ENCODE measurements at regions of chr7 and their contacts with region 1.

Region 1: GRCh38 chr7:66493235-66494181 is 135.2 kb upstream of the KCTD7 start:
- DNase-seq: peak; percentile 91 to 99 (median 95)
- ATAC-seq: peak; percentile 92
- H3K4me3 ChIP-seq: peak overlapping the region; percentile 87
- H3K4me3 Mint-ChIP-seq: peak overlapping the region; percentile 97
- H3K27ac ChIP-seq: peak overlapping the region; percentile 86 to 95
- H3K27ac Mint-ChIP-seq: peak overlapping the region; percentile 100
- H3K4me1 ChIP-seq: peaks cover 20% of the 10 kb centered on the region
- H3K4me1 Mint-ChIP-seq: peaks cover 22% of the 10 kb centered on the region
- H3K27me3 ChIP-seq: no peaks in the 10 kb centered on the region
- H3K27me3 Mint-ChIP-seq: no peaks in the 10 kb centered on the region
- CTCF ChIP-seq: no peak

Region 2: GRCh38 chr7:65750511-65751344 is 742.8 kb before region 1 on chr7:
- CTCF ChIA-PET with region 1: no interaction called
- POLR2A ChIA-PET with region 1: interaction called, 4 read pairs
- intact Hi-C with region 1: loop called in 1 of 2 experiments (anchors 10 kb)
- DNase-seq: peak; percentile 70 to 92 (median 84)
- ATAC-seq: peak; percentile 96
- H3K4me3 ChIP-seq: peak overlapping the region; percentile 98
- H3K4me3 Mint-ChIP-seq: peak overlapping the region; percentile 99
- H3K27ac ChIP-seq: peak overlapping the region; percentile 56 to 69
- H3K27ac Mint-ChIP-seq: peak overlapping the region; percentile 96
- H3K4me1 ChIP-seq: peaks cover 25% of the 10 kb centered on the region
- H3K4me1 Mint-ChIP-seq: peaks cover 33% of the 10 kb centered on the region
- H3K27me3 ChIP-seq: no peaks in the 10 kb centered on the region
- H3K27me3 Mint-ChIP-seq: no peaks in the 10 kb centered on the region
- CTCF ChIP-seq: no peak

Region 3: DNA sequence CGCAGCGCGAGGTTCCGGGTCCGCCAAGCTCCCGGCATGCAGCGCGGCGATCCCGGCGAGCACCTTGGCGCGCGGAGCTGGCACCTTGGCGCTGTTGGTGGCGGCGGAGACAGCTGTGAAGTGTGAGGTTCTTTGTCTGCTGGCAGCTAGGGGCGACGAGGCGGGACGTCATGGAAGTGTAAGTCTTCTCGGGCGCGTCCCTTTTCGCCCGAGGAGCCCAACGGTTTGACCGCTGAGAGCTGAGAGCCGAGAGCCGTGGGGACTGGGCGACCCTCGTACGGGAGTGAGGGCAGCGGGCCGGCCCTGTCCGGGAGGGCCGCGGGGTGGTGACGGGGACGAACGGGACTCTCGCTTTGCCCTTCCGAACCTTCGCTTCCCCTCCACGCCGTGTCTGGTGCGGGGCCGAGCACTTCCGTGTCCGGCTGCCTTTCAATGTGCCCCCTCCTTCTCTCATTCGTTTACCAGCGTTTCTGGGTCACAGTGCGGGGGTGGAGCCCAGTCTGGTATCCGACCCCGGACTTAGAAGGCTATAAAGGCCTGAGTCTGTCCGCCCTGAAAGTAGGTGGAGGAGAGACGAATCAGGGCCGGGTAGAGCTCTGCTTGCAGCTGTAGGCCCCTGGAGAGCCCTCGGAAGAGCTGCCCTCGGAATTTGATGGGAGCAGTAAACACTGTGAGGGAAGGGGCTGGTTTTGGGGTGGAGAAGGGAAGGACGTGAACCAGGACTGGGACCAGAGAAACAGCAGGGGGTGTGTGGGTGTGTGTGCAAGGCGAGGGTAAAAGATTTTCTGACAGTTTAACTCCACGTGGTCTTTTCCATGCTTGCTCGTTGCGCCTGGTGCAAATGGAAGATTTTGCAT is 378.5 kb before region 1 on chr7 and contains the start of gene CRCP:
- CTCF ChIA-PET with region 1: no interaction called
- POLR2A ChIA-PET with region 1: interaction called, 20 read pairs
- intact Hi-C with region 1: loop called in 1 of 2 experiments (anchors 10 kb)
- DNase-seq: peak; percentile 62 to 92 (median 80)
- ATAC-seq: peak; percentile 92
- H3K4me3 ChIP-seq: peak within 1 kb of the TSS; percentile 93
- H3K4me3 Mint-ChIP-seq: peak within 1 kb of the TSS; percentile 96
- H3K27ac ChIP-seq: peak within 1 kb of the TSS; percentile 86 to 95
- H3K27ac Mint-ChIP-seq: peak within 1 kb of the TSS; percentile 88
- H3K4me1 ChIP-seq: peaks cover 47% of the 10 kb centered on the region
- H3K4me1 Mint-ChIP-seq: peaks cover 50% of the 10 kb centered on the region
- H3K27me3 ChIP-seq: no peaks in the 10 kb centered on the region
- H3K27me3 Mint-ChIP-seq: no peaks in the 10 kb centered on the region
- CTCF ChIP-seq: peak; percentile 19
- total RNA-seq, gene CRCP: 29.2 to 29.4 TPM

Region 4: GRCh38 chr7:66537876-66538275 is 44.4 kb after region 1 on chr7:
- CTCF ChIA-PET with region 1: no interaction called
- POLR2A ChIA-PET with region 1: no interaction called
- intact Hi-C with region 1: no loop called
- DNase-seq: no peak
- ATAC-seq: no peak
- H3K4me3 ChIP-seq: no peak overlapping the region
- H3K4me3 Mint-ChIP-seq: no peak overlapping the region
- H3K27ac ChIP-seq: no peak overlapping the region
- H3K27ac Mint-ChIP-seq: no peak overlapping the region
- H3K4me1 ChIP-seq: no peaks in the 10 kb centered on the region
- H3K4me1 Mint-ChIP-seq: no peaks in the 10 kb centered on the region
- H3K27me3 ChIP-seq: no peaks in the 10 kb centered on the region
- H3K27me3 Mint-ChIP-seq: no peaks in the 10 kb centered on the region
- CTCF ChIP-seq: no peak

Region 5: DNA sequence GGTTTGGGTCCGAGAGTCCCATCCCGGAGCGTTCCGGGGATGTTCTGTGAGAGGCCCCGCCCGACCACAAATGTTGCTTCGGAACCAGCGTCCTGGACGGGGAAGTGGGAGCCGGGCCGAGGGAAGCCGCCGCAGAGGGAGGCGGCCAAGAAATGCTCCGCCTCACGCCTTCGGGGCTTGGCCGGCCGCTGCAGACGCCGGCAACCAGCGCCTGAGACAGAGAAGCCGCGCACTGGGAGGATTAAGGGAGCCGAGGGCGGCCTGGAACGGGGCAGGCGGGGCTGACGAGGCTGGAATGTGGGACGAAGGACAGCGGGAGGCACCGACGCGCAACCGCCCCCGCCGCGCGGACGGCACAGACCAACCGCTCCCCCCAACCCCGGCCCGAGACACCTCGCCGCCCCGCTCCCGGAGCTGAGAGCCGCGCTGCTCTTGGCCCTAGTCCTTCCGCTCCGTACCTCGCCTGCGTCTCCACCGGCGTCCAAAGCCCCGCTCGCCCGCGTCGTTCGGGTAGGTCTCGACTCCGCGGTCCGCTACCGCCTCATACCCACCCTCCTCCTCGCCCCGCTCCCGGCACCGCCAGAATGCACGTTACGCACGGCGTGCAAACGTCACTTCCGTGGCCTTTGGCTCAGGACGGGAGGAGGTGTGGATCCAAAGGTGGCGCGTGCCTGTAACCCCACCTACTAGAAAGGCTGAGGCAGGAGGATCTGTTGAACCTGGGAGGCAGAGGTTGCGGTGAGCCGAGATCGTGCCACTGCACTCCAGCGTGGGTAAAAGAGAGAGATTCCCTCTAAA is 98.5 kb after region 1 on chr7:
- CTCF ChIA-PET with region 1: no interaction called
- POLR2A ChIA-PET with region 1: no interaction called
- intact Hi-C with region 1: loop called in 1 of 2 experiments (anchors 5 kb)
- DNase-seq: peak; percentile 76 to 96 (median 88)
- ATAC-seq: peak; percentile 98
- H3K4me3 ChIP-seq: peak overlapping the region; percentile 97
- H3K4me3 Mint-ChIP-seq: peak overlapping the region; percentile 99
- H3K27ac ChIP-seq: peak overlapping the region; percentile 60 to 80
- H3K27ac Mint-ChIP-seq: peak overlapping the region; percentile 99
- H3K4me1 ChIP-seq: peaks cover 43% of the 10 kb centered on the region
- H3K4me1 Mint-ChIP-seq: peaks cover 47% of the 10 kb centered on the region
- H3K27me3 ChIP-seq: no peaks in the 10 kb centered on the region
- H3K27me3 Mint-ChIP-seq: no peaks in the 10 kb centered on the region
- CTCF ChIP-seq: no peak

Region 6: GRCh38 chr7:66740302-66740979 is 246.9 kb after region 1 on chr7 and contains the start of gene RABGEF1:
- CTCF ChIA-PET with region 1: interaction called, 3 read pairs
- POLR2A ChIA-PET with region 1: interaction called, 17 read pairs
- intact Hi-C with region 1: loop called in 1 of 2 experiments (anchors 5 kb)
- DNase-seq: peak; percentile 91 to 99 (median 96)
- ATAC-seq: peak; percentile 91
- H3K4me3 ChIP-seq: peak within 1 kb of the TSS; percentile 90
- H3K4me3 Mint-ChIP-seq: peak within 1 kb of the TSS; percentile 98
- H3K27ac ChIP-seq: peak within 1 kb of the TSS; percentile 71 to 97
- H3K27ac Mint-ChIP-seq: peak within 1 kb of the TSS; percentile 98
- H3K4me1 ChIP-seq: peaks cover 36% of the 10 kb centered on the region
- H3K4me1 Mint-ChIP-seq: peaks cover 42% of the 10 kb centered on the region
- H3K27me3 ChIP-seq: no peaks in the 10 kb centered on the region
- H3K27me3 Mint-ChIP-seq: no peaks in the 10 kb centered on the region
- CTCF ChIP-seq: no peak
- total RNA-seq, gene RABGEF1: 18.9 to 20.1 TPM